ENCODE measurements at regions of chr6 and their contacts with region 1.

Region 1: DNA sequence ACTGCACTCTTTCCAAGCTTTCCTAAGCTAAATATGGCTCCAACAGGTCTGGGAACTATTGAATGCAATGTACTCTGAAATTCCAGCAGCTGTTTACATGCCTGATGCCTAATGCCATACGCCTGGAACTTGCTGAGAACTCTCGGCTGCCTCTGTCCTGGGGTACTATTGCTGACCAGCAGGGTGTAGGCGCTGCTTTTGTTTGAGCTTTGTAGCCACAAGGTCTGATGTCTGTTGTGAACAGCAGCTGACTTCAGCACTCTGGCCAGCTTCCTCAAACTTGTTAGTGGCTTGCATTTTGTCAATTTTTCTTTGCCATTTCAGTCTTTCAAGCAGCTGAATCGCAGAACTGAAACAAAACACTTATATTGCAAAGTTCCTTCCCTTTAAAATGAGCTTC is 26.7 kb downstream of the SAYSD1 start:
- DNase-seq: peak; percentile 68
- ATAC-seq: peak; percentile 99
- H3K4me3 ChIP-seq: no peak overlapping the region
- H3K27ac ChIP-seq: no peak overlapping the region
- H3K4me1 ChIP-seq: no peaks in the 10 kb centered on the region
- H3K27me3 ChIP-seq: peaks cover 6% of the 10 kb centered on the region; the same call in 1 of the 2 replicates
- CTCF ChIP-seq: peak; percentile 48
- POLR2A ChIP-seq: no peak
- RAD21 ChIP-seq: peak; percentile 48

Region 2: DNA sequence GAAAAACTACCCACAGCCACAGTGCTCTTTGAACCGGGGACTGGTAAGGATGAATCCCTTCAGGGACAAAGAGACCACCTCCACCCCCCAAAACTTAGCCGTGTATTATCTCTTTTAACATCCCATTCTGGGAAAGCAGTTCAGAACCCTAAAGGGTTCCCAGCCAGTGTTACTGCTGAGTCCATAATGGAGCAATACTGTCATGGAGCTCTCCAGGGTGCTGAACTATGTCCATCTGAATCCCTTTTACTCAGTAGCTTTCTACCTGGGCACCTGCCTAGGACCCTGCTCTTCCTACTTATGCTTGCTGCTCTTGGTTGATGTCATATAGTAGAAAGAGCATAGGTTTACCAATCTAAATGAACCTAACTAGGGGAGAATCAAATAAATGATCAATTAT is 48.9 kb after region 1 on chr6:
- CTCF ChIA-PET with region 1: no interaction called
- POLR2A ChIA-PET with region 1: no interaction called
- dilution Hi-C with region 1: no loop called
- in situ Hi-C with region 1: no loop called
- intact Hi-C with region 1: loop called (anchors 1 kb)
- DNase-seq: peak; percentile 41
- ATAC-seq: peak; percentile 65
- H3K4me3 ChIP-seq: no peak overlapping the region
- H3K27ac ChIP-seq: no peak overlapping the region
- H3K4me1 ChIP-seq: no peaks in the 10 kb centered on the region
- H3K27me3 ChIP-seq: no peaks in the 10 kb centered on the region
- CTCF ChIP-seq: no peak
- POLR2A ChIP-seq: no peak
- RAD21 ChIP-seq: no peak

Region 3: DNA sequence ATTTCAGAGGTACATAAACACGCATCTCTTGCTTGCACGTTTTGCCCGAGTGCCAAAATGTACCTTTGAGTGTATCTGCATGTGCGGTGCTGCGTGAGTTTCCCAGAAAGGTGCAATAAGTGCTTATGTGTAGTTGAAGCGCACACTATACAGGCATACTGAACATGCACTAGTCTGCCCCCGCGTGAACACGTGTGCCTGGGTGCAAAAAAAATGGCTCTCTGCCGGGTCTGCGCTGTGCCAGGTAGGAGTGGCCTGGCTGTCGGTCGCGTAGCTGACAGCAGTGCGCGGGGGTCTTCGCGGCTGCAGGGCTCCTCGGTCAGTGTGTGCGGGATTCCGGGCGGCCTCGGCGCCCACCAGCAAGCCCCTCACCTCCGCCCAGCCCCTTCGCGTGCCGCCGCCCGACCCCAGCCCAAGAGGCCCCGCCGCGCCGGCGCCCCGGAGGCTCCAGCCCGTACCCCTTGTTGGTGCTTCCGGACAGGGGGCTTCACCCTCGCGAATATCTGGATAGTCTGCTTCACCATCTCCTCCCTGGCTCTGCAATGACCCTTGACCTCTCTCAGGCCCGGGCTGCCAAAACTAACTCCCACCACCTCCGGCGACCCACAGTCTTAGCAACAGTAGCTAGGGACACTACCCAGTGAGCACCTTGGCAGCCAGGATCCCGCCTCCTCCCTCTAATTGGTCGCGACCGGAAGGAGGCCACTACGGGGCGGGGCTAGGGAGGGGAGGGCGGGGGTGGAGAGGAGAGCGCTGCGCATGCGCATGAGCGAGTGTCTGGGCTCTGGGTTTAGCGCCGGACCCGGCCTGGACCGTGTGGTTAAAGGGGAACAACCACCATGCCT is 636.7 kb after region 1 on chr6 and contains the start of gene KIF6:
- CTCF ChIA-PET with region 1: no interaction called
- POLR2A ChIA-PET with region 1: no interaction called
- dilution Hi-C with region 1: no loop called
- in situ Hi-C with region 1: no loop called
- intact Hi-C with region 1: no loop called
- DNase-seq: peak; percentile 73
- ATAC-seq: peak; percentile 100
- H3K4me3 ChIP-seq: peak within 1 kb of the TSS; percentile 79
- H3K27ac ChIP-seq: no peak within 1 kb of the TSS
- H3K4me1 ChIP-seq: no peaks in the 10 kb centered on the region; the same call in 1 of the 2 replicates
- H3K27me3 ChIP-seq: no peaks in the 10 kb centered on the region
- CTCF ChIP-seq: no peak
- POLR2A ChIP-seq: no peak
- RAD21 ChIP-seq: no peak
- total RNA-seq, gene KIF6: under 0.01 TPM in 1 of 2 replicates, not detected in the other

Region 4: GRCh38 chr6:40563111-40563510 is 1474.8 kb after region 1 on chr6:
- CTCF ChIA-PET with region 1: no interaction called
- POLR2A ChIA-PET with region 1: no interaction called
- dilution Hi-C with region 1: no loop called
- in situ Hi-C with region 1: no loop called
- intact Hi-C with region 1: no loop called
- DNase-seq: no peak
- ATAC-seq: no peak
- H3K4me3 ChIP-seq: no peak overlapping the region
- H3K27ac ChIP-seq: no peak overlapping the region
- H3K4me1 ChIP-seq: no peaks in the 10 kb centered on the region
- H3K27me3 ChIP-seq: no peaks in the 10 kb centered on the region
- CTCF ChIP-seq: no peak
- POLR2A ChIP-seq: no peak
- RAD21 ChIP-seq: no peak